Left cardiac atrium (tissue), 4 donors: ENCODE measurements at regions of chr10 and their contacts with region 1.

Region 1: DNA sequence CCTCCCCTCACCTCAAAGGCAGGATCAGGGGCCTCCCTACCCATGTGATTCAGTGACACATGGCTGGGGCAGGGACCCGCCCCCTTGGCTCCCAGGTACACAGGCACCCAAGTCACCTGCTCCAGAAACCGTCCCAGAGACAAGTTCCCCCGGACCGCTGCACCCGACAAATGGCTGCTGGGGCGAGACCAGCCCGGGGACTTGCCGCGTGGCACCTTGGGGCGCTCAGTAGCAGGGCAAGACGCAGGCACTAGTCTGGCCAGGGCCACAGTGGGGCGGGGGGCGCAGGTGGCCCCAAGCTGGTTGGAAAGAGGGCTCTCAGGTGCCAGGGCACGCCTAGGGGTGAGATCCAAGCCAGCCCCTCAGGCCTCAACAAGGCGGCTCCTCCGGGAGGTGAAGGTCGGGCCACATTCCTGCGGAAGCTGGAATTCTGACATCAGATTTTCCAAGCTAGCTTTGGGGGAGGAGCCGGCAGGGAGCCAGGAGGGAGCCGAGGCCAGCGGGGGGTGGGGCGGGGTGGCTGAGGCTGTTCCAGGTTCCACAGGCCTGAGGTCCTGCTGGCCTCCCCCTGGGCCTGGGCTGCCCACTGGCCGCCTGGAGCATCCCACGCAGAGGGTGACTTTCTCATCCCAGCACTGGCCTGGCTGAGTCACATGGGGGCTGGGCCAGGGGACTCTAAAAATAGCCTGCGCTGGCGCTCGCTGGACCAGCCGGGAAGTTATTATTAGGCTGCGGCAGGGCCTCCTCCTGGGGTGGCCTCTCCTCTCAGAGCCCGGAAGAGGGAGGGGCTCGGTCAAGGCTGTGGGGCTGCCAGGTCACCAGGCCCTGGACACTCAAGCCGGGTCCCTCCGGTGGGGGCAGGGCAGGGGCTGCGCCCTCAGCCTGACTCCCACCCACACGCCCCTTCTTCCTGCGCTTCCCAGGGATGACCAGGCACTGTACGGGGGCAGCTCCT is 20.5 kb upstream of the INPP5A start:
- DNase-seq: peak; percentile 95
- ATAC-seq: peak; percentile 90 to 91

Region 2: DNA sequence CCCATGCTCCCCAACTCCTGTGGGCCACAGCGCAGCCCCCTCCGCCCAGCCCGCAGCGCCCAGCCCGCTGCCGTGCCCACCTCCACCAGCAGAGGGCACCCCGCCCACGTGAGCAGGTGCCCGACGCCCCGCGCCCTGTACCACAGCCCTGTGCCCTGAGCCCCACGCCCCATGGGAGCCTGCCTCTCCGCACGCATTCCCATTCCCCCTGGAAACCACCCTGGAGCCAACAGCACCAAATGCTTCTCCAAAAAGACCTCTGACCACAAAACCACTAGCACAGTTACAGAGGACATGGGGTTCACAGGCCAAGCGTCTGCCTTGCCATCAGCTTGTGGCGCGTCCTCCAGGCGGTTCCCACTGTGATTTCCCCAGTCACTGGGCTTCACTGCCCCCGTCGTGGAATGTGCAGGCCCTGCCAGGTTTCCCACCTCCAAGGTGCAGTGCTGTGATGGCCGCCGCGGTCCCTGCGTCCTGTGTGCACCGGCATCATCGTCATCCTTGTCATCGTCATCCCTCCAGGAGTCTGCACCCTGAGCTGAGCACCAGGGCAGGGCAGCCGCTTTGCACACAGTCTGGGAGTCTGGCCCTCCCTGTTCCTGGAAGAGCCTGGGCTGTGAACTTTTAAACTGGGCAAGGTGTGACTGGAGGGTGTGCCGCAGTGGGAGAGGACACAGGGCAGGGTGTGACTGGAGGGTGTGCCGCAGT is 58.3 kb before region 1 on chr10:
- intact Hi-C with region 1: loop called in 1 of 2 experiments (anchors 10 kb)
- DNase-seq: peak; percentile 59
- ATAC-seq: peak; percentile 65 to 74